Naive thymus-derived CD4-positive, alpha-beta T cell (primary cell): ENCODE measurements at regions of chr20 and their contacts with region 1.

Region 1: DNA sequence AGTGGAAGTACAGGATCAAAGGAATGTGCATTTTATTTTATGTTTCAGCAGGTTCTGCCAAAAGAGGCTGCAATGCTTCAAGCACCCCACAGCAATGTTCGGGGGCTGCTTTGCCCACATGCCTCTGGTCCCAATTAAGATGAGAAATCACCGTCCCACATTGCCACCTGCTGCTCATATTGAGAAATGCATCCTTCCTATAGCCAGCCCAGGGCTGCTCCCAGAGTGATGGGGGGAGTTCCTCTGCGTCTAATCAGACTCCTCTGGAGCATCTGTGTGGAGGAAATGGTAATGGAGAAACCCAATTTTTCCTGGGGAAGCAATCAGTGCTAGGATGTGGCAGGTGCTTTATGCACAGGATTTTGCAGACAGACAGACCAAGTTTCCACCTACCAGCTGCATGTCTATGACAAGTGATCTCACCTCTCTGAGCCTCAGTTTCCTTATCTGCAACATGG is 33.7 kb downstream of the PTGIS start:
- DNase-seq: peak in 8 of 9 donors; percentile 5 to 55 (median 38)
- ATAC-seq: peak; percentile 85
- H3K4me3 ChIP-seq: no peak overlapping the region
- H3K4me3 Mint-ChIP-seq: peak overlapping the region in 1 of 10 donors; percentile 44
- H3K27ac ChIP-seq: no peak overlapping the region
- H3K27ac Mint-ChIP-seq: peak overlapping the region in 1 of 9 donors; percentile 85
- H3K4me1 ChIP-seq: peaks cover 0 to 8% of the 10 kb centered on the region in 2 donors
- H3K4me1 Mint-ChIP-seq: peaks cover 0 to 24% (median 0%) of the 10 kb centered on the region in 7 donors
- H3K27me3 ChIP-seq: no peaks in the 10 kb centered on the region
- H3K27me3 Mint-ChIP-seq: peaks cover 3 to 24% (median 12%) of the 10 kb centered on the region in 5 donors

Region 2: GRCh38 chr20:49338061-49338460 is 196.2 kb before region 1 on chr20:
- CTCF ChIA-PET with region 1: no interaction called
- POLR2A ChIA-PET with region 1: no interaction called
- intact Hi-C with region 1: loop called in 1 of 2 experiments (anchors 1 kb)
- DNase-seq: no peak
- ATAC-seq: no peak
- H3K4me3 ChIP-seq: no peak overlapping the region
- H3K4me3 Mint-ChIP-seq: no peak overlapping the region
- H3K27ac ChIP-seq: no peak overlapping the region
- H3K27ac Mint-ChIP-seq: no peak overlapping the region
- H3K4me1 ChIP-seq: no peaks in the 10 kb centered on the region
- H3K4me1 Mint-ChIP-seq: peaks cover 0 to 4% (median 0%) of the 10 kb centered on the region in 7 donors
- H3K27me3 ChIP-seq: peaks cover 0 to 5% of the 10 kb centered on the region in 2 donors
- H3K27me3 Mint-ChIP-seq: peaks cover 3 to 12% (median 9%) of the 10 kb centered on the region in 5 donors

Region 3: GRCh38 chr20:49356676-49357075 is 177.6 kb before region 1 on chr20:
- CTCF ChIA-PET with region 1: no interaction called
- POLR2A ChIA-PET with region 1: no interaction called
- intact Hi-C with region 1: no loop called
- DNase-seq: no peak
- ATAC-seq: no peak
- H3K4me3 ChIP-seq: no peak overlapping the region
- H3K4me3 Mint-ChIP-seq: no peak overlapping the region
- H3K27ac ChIP-seq: no peak overlapping the region
- H3K27ac Mint-ChIP-seq: no peak overlapping the region
- H3K4me1 ChIP-seq: no peaks in the 10 kb centered on the region
- H3K4me1 Mint-ChIP-seq: no peaks in the 10 kb centered on the region
- H3K27me3 ChIP-seq: no peaks in the 10 kb centered on the region
- H3K27me3 Mint-ChIP-seq: peaks cover 6 to 27% (median 7%) of the 10 kb centered on the region in 5 donors

Region 4: GRCh38 chr20:49384437-49385088 is 149.7 kb before region 1 on chr20:
- CTCF ChIA-PET with region 1: no interaction called
- POLR2A ChIA-PET with region 1: no interaction called
- intact Hi-C with region 1: loop called in 1 of 2 experiments (anchors 1 kb)
- DNase-seq: peak in 8 of 9 donors; percentile 5 to 73 (median 26)
- ATAC-seq: peak; percentile 46
- H3K4me3 ChIP-seq: no peak overlapping the region
- H3K4me3 Mint-ChIP-seq: no peak overlapping the region
- H3K27ac ChIP-seq: no peak overlapping the region
- H3K27ac Mint-ChIP-seq: peak overlapping the region in 1 of 9 donors; percentile 84
- H3K4me1 ChIP-seq: no peaks in the 10 kb centered on the region
- H3K4me1 Mint-ChIP-seq: peaks cover 0 to 3% (median 0%) of the 10 kb centered on the region in 7 donors
- H3K27me3 ChIP-seq: no peaks in the 10 kb centered on the region
- H3K27me3 Mint-ChIP-seq: peaks cover 21 to 57% (median 32%) of the 10 kb centered on the region in 5 donors

Region 5: DNA sequence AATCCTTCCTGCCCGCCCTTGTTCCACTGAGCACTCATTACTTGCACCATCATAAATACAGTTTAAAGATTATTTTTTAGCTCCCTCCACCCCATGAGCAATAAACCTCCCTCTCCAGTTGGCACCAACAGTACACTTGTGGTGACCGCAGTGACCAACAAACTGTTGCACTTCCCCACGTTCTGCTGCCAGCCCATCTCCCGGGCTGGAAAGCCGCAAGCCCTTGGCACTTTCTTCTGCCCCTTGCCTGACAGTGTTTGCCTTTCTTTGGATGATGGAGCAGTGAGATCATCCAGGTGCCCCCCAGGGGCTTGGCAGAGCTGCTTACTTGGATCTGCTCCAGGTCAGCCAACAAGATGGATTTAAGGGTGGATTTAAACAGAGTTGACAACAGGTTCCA is 73.4 kb before region 1 on chr20:
- CTCF ChIA-PET with region 1: no interaction called
- POLR2A ChIA-PET with region 1: no interaction called
- intact Hi-C with region 1: no loop called
- DNase-seq: no peak
- ATAC-seq: no peak
- H3K4me3 ChIP-seq: no peak overlapping the region
- H3K4me3 Mint-ChIP-seq: no peak overlapping the region
- H3K27ac ChIP-seq: no peak overlapping the region
- H3K27ac Mint-ChIP-seq: no peak overlapping the region
- H3K4me1 ChIP-seq: no peaks in the 10 kb centered on the region
- H3K4me1 Mint-ChIP-seq: peaks cover 0 to 4% (median 0%) of the 10 kb centered on the region in 7 donors
- H3K27me3 ChIP-seq: no peaks in the 10 kb centered on the region
- H3K27me3 Mint-ChIP-seq: peaks cover 5 to 29% (median 25%) of the 10 kb centered on the region in 5 donors

Region 6: DNA sequence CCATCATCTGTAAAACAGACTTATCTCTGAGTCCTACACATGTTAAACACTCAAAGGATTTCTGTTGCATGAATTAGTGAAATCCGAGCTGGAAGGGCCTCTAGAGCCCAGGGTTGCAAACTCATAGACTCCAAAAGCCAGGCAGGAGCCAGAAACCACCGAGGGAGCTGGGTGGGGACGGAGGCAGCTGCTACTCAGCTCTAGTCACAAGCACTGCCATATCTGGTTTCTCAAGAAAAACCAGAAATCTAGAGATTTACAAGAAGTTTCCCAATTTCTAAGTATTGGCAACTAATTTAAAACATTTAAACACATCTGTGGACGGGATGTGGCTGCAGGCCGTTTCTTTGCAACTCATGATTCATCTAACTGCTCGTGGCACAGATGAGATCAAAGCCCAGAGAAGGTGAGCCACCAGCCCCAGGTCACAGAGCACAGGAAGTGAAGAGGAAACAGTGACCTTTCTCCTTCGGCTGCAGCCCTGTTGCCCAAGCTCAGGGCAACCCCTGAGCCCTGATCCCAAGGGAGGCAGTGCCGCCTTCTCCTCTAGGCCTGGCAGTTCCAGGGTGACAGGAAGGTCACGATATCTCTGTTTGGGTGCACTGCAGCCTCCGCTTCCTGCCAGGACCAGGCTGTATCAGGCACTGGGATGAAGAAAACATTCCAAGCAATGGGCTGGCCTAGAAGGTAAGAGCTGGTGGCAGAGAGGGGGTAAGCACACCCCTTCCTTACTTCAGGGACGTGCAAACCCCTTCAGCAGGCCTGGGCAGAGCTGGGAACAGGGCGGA is 60.1 kb after region 1 on chr20:
- CTCF ChIA-PET with region 1: no interaction called
- POLR2A ChIA-PET with region 1: no interaction called
- intact Hi-C with region 1: loop called in 1 of 2 experiments (anchors 2 kb)
- DNase-seq: peak in 1 of 9 donors; percentile 76
- ATAC-seq: no peak
- H3K4me3 ChIP-seq: no peak overlapping the region
- H3K4me3 Mint-ChIP-seq: peak overlapping the region in 1 of 10 donors; percentile 85
- H3K27ac ChIP-seq: no peak overlapping the region
- H3K27ac Mint-ChIP-seq: peak overlapping the region in 1 of 9 donors; percentile 97
- H3K4me1 ChIP-seq: peaks cover 0 to 38% of the 10 kb centered on the region in 2 donors
- H3K4me1 Mint-ChIP-seq: peaks cover 0 to 86% (median 4%) of the 10 kb centered on the region in 7 donors
- H3K27me3 ChIP-seq: no peaks in the 10 kb centered on the region
- H3K27me3 Mint-ChIP-seq: peaks cover 0 to 13% (median 4%) of the 10 kb centered on the region in 5 donors

Region 7: GRCh38 chr20:49846206-49846807 is 312.0 kb after region 1 on chr20:
- CTCF ChIA-PET with region 1: no interaction called
- POLR2A ChIA-PET with region 1: no interaction called
- intact Hi-C with region 1: loop called in 1 of 2 experiments (anchors 1 kb)
- DNase-seq: peak in 8 of 9 donors; percentile 34 to 70 (median 60)
- ATAC-seq: peak; percentile 90
- H3K4me3 ChIP-seq: no peak overlapping the region
- H3K4me3 Mint-ChIP-seq: no peak overlapping the region
- H3K27ac ChIP-seq: no peak overlapping the region
- H3K27ac Mint-ChIP-seq: no peak overlapping the region
- H3K4me1 ChIP-seq: no peaks in the 10 kb centered on the region
- H3K4me1 Mint-ChIP-seq: peaks cover 9 to 25% (median 13%) of the 10 kb centered on the region in 7 donors
- H3K27me3 ChIP-seq: no peaks in the 10 kb centered on the region
- H3K27me3 Mint-ChIP-seq: no peaks in the 10 kb centered on the region

Region 8: GRCh38 chr20:49936153-49937027 is 402.1 kb after region 1 on chr20 and contains the start of gene RNF114:
- CTCF ChIA-PET with region 1: no interaction called
- POLR2A ChIA-PET with region 1: no interaction called
- intact Hi-C with region 1: no loop called
- DNase-seq: peak; percentile 79 to 92 (median 86)
- ATAC-seq: peak; percentile 99
- H3K4me3 ChIP-seq: peak within 1 kb of the TSS; percentile 90
- H3K4me3 Mint-ChIP-seq: peak within 1 kb of the TSS; percentile 95 to 100 (median 98)
- H3K27ac ChIP-seq: peak within 1 kb of the TSS; percentile 95
- H3K27ac Mint-ChIP-seq: peak within 1 kb of the TSS; percentile 83 to 98 (median 95)
- H3K4me1 ChIP-seq: peaks cover 20 to 27% of the 10 kb centered on the region in 2 donors
- H3K4me1 Mint-ChIP-seq: peaks cover 36 to 61% (median 53%) of the 10 kb centered on the region in 7 donors
- H3K27me3 ChIP-seq: no peaks in the 10 kb centered on the region
- H3K27me3 Mint-ChIP-seq: no peaks in the 10 kb centered on the region
- total RNA-seq, gene RNF114: 67.1 to 113 (median 101) TPM